CD8-positive, alpha-beta memory T cell (primary cell): ENCODE measurements at regions of chr1 and their contacts with region 1.

Region 1: GRCh38 chr1:224513787-224514209 is 79.2 kb upstream of the WDR26 start:
- DNase-seq: peak; percentile 62 to 86 (median 68)
- H3K4me3 ChIP-seq: no peak overlapping the region
- H3K4me3 Mint-ChIP-seq: no peak overlapping the region
- H3K27ac ChIP-seq: no peak overlapping the region
- H3K27ac Mint-ChIP-seq: peak overlapping the region in 3 of 8 donors; percentile 0 to 54 (median 24)
- H3K4me1 ChIP-seq: peaks cover 3% of the 10 kb centered on the region
- H3K4me1 Mint-ChIP-seq: peaks cover 6 to 7% (median 7%) of the 10 kb centered on the region in 3 donors
- H3K27me3 ChIP-seq: no peaks in the 10 kb centered on the region
- H3K27me3 Mint-ChIP-seq: no peaks in the 10 kb centered on the region

Region 2: GRCh38 chr1:224851210-224851847 is 337.5 kb after region 1 on chr1:
- CTCF ChIA-PET with region 1: interaction called, 17 read pairs
- POLR2A ChIA-PET with region 1: no interaction called
- DNase-seq: peak; percentile 1 to 61 (median 21)
- H3K4me3 ChIP-seq: no peak overlapping the region
- H3K4me3 Mint-ChIP-seq: no peak overlapping the region
- H3K27ac ChIP-seq: no peak overlapping the region
- H3K27ac Mint-ChIP-seq: no peak overlapping the region
- H3K4me1 ChIP-seq: no peaks in the 10 kb centered on the region
- H3K4me1 Mint-ChIP-seq: no peaks in the 10 kb centered on the region
- H3K27me3 ChIP-seq: no peaks in the 10 kb centered on the region
- H3K27me3 Mint-ChIP-seq: peaks cover 3 to 27% of the 10 kb centered on the region in 2 donors

Region 3: DNA sequence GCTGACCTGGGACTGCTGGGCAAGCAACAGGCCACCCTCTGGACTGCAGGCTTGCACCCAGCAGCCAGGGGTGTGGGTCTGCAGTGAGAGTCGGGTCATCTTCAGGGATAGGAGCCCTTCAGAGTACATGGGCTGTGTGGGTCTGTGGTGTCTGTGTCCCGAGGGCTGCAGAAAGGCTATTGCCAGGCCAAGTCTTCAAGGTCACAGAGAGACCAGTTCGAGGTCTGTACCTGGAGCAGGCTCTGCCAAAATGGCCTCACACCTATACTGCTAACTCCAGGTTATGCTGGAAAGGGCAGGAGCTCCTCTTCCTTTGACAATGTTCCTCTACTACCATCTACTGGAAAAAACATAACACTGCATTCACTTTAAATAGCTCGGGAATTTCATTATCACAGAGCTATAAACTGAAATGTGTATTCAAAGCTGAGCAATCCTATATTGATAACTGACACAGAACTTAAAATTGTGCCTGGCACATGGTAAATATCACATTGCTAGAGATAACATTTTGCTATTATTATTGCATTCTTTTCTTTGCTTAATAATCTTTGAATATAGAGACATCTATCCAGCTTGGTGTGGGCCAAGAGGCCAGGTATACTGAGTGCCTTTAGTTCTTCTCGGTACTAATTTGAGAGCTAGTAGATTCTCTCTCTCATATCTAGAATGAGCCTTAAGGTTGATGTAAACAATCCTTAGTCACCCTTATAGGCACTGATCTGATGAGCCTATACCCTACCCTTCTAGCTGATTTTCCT is 408.8 kb after region 1 on chr1:
- CTCF ChIA-PET with region 1: interaction called, 22 read pairs
- POLR2A ChIA-PET with region 1: no interaction called
- DNase-seq: peak in 1 of 5 donors; percentile 1
- H3K4me3 ChIP-seq: no peak overlapping the region
- H3K4me3 Mint-ChIP-seq: no peak overlapping the region
- H3K27ac ChIP-seq: no peak overlapping the region
- H3K27ac Mint-ChIP-seq: no peak overlapping the region
- H3K4me1 ChIP-seq: no peaks in the 10 kb centered on the region
- H3K4me1 Mint-ChIP-seq: no peaks in the 10 kb centered on the region
- H3K27me3 ChIP-seq: no peaks in the 10 kb centered on the region
- H3K27me3 Mint-ChIP-seq: peaks cover 12 to 25% of the 10 kb centered on the region in 2 donors